Activated CD4-positive, alpha-beta memory T cell treated with anti-CD3 and anti-CD28 coated beads, Interleukin-2, amount 10 ng/mL, durations not matched to agents 7 days and 5 days (primary cell): ENCODE measurements at regions of chr17 and their contacts with region 1.

Region 1: GRCh38 chr17:56779898-56780733 is 53.6 kb downstream of the C17orf67 start:
- DNase-seq: peak; percentile 91
- H3K4me3 Mint-ChIP-seq: peak overlapping the region; percentile 81
- H3K27ac Mint-ChIP-seq: peak overlapping the region; percentile 90
- H3K4me1 Mint-ChIP-seq: peaks cover 37% of the 10 kb centered on the region
- H3K27me3 Mint-ChIP-seq: peaks cover 11% of the 10 kb centered on the region

Region 2: DNA sequence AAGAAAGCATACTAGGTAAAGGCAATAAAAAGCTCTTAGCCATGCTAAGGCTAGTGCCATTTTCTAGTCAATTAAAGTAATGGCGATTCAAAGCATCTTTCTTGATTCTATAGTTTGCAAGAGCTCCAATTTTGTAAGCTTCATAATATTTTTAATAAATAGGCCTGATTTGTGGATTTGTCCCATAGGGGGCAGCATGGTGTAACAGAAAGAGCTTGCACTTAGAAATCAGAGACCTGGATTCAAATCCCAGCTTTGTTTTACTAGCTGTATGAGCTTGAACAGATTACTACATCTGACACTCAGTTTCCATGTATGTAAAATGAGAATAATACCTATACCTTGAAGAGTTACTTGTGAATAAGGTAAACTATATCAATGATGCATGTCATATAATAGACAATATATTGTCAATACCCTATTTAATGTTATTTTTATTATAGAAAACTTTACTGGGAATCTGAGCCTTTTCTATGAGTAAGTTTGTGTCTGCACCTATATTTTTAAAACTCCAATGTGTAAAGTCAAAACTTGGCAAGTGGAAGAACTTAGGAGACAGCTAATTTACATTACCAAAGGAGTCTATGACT is 280.2 kb before region 1 on chr17:
- CTCF ChIA-PET with region 1: interaction called, 13 read pairs
- POLR2A ChIA-PET with region 1: no interaction called
- DNase-seq: peak; percentile 19
- H3K4me3 Mint-ChIP-seq: no peak overlapping the region
- H3K27ac Mint-ChIP-seq: no peak overlapping the region
- H3K4me1 Mint-ChIP-seq: no peaks in the 10 kb centered on the region
- H3K27me3 Mint-ChIP-seq: peaks cover 17% of the 10 kb centered on the region

Region 3: DNA sequence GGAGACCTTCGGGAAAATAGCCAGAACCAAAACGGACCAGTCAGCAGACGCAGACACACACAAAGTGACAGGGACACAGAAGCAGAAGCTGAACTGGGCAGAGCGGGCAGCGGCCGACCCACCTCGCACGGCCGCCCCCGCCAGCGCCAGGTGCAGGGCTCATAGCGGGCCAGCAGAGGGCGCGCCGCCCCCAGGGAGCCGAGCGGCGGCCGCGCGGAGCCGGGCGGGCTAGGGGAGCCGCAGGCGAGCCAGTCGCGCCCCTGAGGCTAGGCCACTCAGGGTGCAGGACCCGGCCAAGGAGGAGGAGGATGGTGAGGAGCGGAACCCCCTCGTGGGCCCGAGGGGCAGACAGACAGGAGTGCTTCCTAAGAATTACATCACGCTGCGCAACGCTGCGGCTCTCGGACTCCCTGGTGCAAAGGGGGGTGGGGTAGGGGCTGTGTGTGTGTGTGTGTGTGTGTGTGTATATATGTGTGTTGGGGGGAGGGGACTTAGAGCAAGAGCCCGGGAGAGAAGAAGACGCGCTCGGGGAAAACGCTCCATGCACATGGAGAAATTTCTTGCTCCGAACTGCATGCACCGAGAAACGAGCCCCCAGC is 187.5 kb before region 1 on chr17:
- CTCF ChIA-PET with region 1: interaction called, 20 read pairs
- POLR2A ChIA-PET with region 1: interaction called, 3 read pairs
- DNase-seq: peak; percentile 59
- H3K4me3 Mint-ChIP-seq: peak overlapping the region; percentile 46
- H3K27ac Mint-ChIP-seq: no peak overlapping the region
- H3K4me1 Mint-ChIP-seq: peaks cover 30% of the 10 kb centered on the region
- H3K27me3 Mint-ChIP-seq: peaks cover 64% of the 10 kb centered on the region

Region 4: GRCh38 chr17:56679115-56679766 is 100.9 kb before region 1 on chr17:
- CTCF ChIA-PET with region 1: interaction called, 11 read pairs
- POLR2A ChIA-PET with region 1: interaction called, 3 read pairs
- DNase-seq: no peak
- H3K4me3 Mint-ChIP-seq: no peak overlapping the region
- H3K27ac Mint-ChIP-seq: no peak overlapping the region
- H3K4me1 Mint-ChIP-seq: peaks cover 7% of the 10 kb centered on the region
- H3K27me3 Mint-ChIP-seq: peaks cover 26% of the 10 kb centered on the region

Region 5: DNA sequence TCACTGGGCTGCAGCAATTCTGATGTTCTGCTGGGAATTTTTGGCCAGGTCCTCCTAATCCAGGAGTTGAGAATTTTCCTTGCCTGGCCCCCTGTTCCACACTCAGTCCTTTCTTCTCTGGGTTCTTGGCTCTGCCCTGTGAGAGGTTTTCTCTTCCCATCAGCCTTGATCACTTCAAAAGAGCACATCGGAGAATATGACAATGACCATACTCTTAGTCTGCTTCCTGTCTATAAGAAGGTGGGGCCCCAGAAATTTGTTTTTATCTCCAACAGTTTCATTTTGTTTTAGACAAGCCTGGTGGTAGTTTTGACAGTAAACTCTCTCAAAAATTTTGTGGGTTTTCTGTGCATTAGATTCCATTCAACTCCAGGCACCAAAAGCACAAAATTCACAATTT is 17.1 kb before region 1 on chr17:
- CTCF ChIA-PET with region 1: interaction called, 16 read pairs
- POLR2A ChIA-PET with region 1: interaction called, 11 read pairs
- DNase-seq: no peak
- H3K4me3 Mint-ChIP-seq: no peak overlapping the region
- H3K27ac Mint-ChIP-seq: peak overlapping the region; percentile 28
- H3K4me1 Mint-ChIP-seq: peaks cover 12% of the 10 kb centered on the region
- H3K27me3 Mint-ChIP-seq: peaks cover 16% of the 10 kb centered on the region

Region 6: GRCh38 chr17:56891784-56892183 is 111.7 kb after region 1 on chr17:
- CTCF ChIA-PET with region 1: no interaction called
- POLR2A ChIA-PET with region 1: no interaction called
- DNase-seq: no peak
- H3K4me3 Mint-ChIP-seq: no peak overlapping the region
- H3K27ac Mint-ChIP-seq: no peak overlapping the region
- H3K4me1 Mint-ChIP-seq: peaks cover 9% of the 10 kb centered on the region
- H3K27me3 Mint-ChIP-seq: no peaks in the 10 kb centered on the region